OCI-LY7 (cell line): ENCODE measurements at regions of chr2 and their contacts with region 1.

Region 1: GRCh38 chr2:238263204-238264071 is 23.6 kb upstream of the HES6 start:
- DNase-seq: peak; percentile 78
- H3K4me3 ChIP-seq: no peak overlapping the region
- H3K27ac ChIP-seq: no peak overlapping the region
- H3K4me1 ChIP-seq: no peaks in the 10 kb centered on the region
- CTCF ChIP-seq: peak; percentile 95

Region 2: GRCh38 chr2:237858294-237859081 is 404.9 kb before region 1 on chr2:
- CTCF ChIA-PET with region 1: no interaction called
- POLR2A ChIA-PET with region 1: no interaction called
- intact Hi-C with region 1: loop called (anchors 1 kb)
- DNase-seq: peak; percentile 53
- H3K4me3 ChIP-seq: no peak overlapping the region
- H3K27ac ChIP-seq: no peak overlapping the region
- H3K4me1 ChIP-seq: no peaks in the 10 kb centered on the region
- CTCF ChIP-seq: peak; percentile 72